ENCODE measurements at regions of chr15 and their contacts with region 1.

Region 1: GRCh38 chr15:101008158-101009139 is 89.3 kb downstream of the LRRK1 start:
- DNase-seq: peak; percentile 74 to 92 (median 86)
- ATAC-seq: peak; percentile 98
- H3K4me3 ChIP-seq: peak overlapping the region; percentile 73 to 81
- H3K4me3 Mint-ChIP-seq: peak overlapping the region; percentile 88
- H3K27ac ChIP-seq: no peak overlapping the region
- H3K27ac Mint-ChIP-seq: peak overlapping the region; percentile 60
- H3K4me1 ChIP-seq: peaks cover 13% of the 10 kb centered on the region
- H3K4me1 Mint-ChIP-seq: peaks cover 19% of the 10 kb centered on the region
- H3K27me3 ChIP-seq: peaks cover 0 to 3% of the 10 kb centered on the region in 2 experiments
- H3K27me3 Mint-ChIP-seq: no peaks in the 10 kb centered on the region
- CTCF ChIP-seq: peak; percentile 96

Region 2: GRCh38 chr15:100627789-100628395 is 380.6 kb before region 1 on chr15:
- CTCF ChIA-PET with region 1: interaction called, 7 read pairs
- POLR2A ChIA-PET with region 1: no interaction called
- intact Hi-C with region 1: loop called in 1 of 2 experiments (anchors 1 kb)
- DNase-seq: peak; percentile 27 to 81 (median 65)
- ATAC-seq: peak; percentile 96
- H3K4me3 ChIP-seq: no peak overlapping the region
- H3K4me3 Mint-ChIP-seq: no peak overlapping the region
- H3K27ac ChIP-seq: no peak overlapping the region
- H3K27ac Mint-ChIP-seq: no peak overlapping the region
- H3K4me1 ChIP-seq: no peaks in the 10 kb centered on the region
- H3K4me1 Mint-ChIP-seq: peaks cover 31% of the 10 kb centered on the region
- H3K27me3 ChIP-seq: no peaks in the 10 kb centered on the region
- H3K27me3 Mint-ChIP-seq: no peaks in the 10 kb centered on the region
- CTCF ChIP-seq: peak; percentile 81

Region 3: DNA sequence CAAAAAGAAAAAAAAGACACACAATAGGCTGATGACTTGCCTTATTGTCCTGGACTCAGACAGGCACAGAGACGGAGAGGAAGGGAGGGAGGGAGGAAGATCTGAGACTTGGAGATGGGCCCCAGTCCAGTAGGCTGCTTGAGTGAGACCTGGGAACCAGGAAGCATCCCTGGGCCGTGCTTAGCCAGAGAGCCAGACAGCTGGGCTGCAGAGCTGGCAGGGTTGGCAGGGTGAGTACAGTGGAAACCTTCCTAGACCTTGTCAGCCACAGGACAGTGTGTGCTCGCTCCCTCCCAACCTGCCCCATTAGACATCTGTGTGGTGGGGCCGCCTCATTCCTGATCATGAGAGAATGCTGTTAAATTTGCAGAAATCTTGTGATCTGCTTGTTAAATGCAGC is 236.7 kb before region 1 on chr15:
- CTCF ChIA-PET with region 1: no interaction called
- POLR2A ChIA-PET with region 1: no interaction called
- intact Hi-C with region 1: no loop called
- DNase-seq: no peak
- ATAC-seq: no peak
- H3K4me3 ChIP-seq: no peak overlapping the region
- H3K4me3 Mint-ChIP-seq: no peak overlapping the region
- H3K27ac ChIP-seq: no peak overlapping the region
- H3K27ac Mint-ChIP-seq: no peak overlapping the region
- H3K4me1 ChIP-seq: no peaks in the 10 kb centered on the region
- H3K4me1 Mint-ChIP-seq: no peaks in the 10 kb centered on the region
- H3K27me3 ChIP-seq: no peaks in the 10 kb centered on the region
- H3K27me3 Mint-ChIP-seq: peaks cover 3% of the 10 kb centered on the region
- CTCF ChIP-seq: no peak

Region 4: GRCh38 chr15:100849252-100850171 is 158.9 kb before region 1 on chr15:
- CTCF ChIA-PET with region 1: no interaction called
- POLR2A ChIA-PET with region 1: no interaction called
- intact Hi-C with region 1: loop called in 1 of 2 experiments (anchors 10 kb)
- DNase-seq: peak; percentile 18 to 77 (median 61)
- ATAC-seq: peak; percentile 94
- H3K4me3 ChIP-seq: peak overlapping the region; percentile 44 to 65
- H3K4me3 Mint-ChIP-seq: peak overlapping the region; percentile 88
- H3K27ac ChIP-seq: no peak overlapping the region
- H3K27ac Mint-ChIP-seq: no peak overlapping the region
- H3K4me1 ChIP-seq: peaks cover 4% of the 10 kb centered on the region
- H3K4me1 Mint-ChIP-seq: peaks cover 5% of the 10 kb centered on the region
- H3K27me3 ChIP-seq: peaks cover 0 to 6% of the 10 kb centered on the region in 2 experiments
- H3K27me3 Mint-ChIP-seq: peaks cover 20% of the 10 kb centered on the region
- CTCF ChIP-seq: no peak

Region 5: GRCh38 chr15:100863796-100864267 is 144.6 kb before region 1 on chr15:
- CTCF ChIA-PET with region 1: no interaction called
- POLR2A ChIA-PET with region 1: no interaction called
- intact Hi-C with region 1: no loop called
- DNase-seq: no peak
- ATAC-seq: no peak
- H3K4me3 ChIP-seq: no peak overlapping the region
- H3K4me3 Mint-ChIP-seq: no peak overlapping the region
- H3K27ac ChIP-seq: no peak overlapping the region
- H3K27ac Mint-ChIP-seq: no peak overlapping the region
- H3K4me1 ChIP-seq: no peaks in the 10 kb centered on the region
- H3K4me1 Mint-ChIP-seq: no peaks in the 10 kb centered on the region
- H3K27me3 ChIP-seq: no peaks in the 10 kb centered on the region
- H3K27me3 Mint-ChIP-seq: peaks cover 15% of the 10 kb centered on the region
- CTCF ChIP-seq: no peak

Region 6: DNA sequence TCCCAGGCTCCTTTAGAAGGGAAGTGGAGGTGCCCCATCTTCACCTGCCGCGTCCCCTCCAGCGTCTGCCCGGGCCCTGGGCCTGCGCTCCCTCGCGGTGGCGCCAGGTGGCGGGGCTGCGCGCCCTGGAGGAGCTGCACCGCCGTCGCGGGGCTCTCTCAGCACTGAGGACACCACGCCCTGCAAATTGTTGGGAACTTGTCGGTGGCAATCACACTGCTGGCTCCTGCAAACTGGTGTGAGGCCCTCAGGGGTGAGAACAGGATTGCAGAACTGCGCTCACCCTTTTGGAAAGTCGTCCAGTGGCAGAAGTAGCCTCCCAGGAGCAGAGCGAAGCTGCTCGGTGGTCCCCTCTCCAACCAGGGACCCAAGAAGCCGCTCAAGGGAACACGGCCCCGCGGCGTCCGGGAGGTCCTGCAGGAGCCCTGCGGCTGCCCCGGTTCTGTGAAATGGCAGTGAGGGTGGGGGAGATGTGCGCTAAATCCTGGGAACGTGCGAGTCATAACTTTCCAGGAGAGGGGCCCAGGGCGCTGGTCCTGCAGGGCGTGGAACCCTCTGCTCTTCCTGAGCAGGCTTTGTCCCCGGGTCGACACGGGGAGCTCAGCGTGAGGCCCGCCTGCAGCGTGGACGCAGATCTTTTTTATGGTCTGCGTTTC is 90.3 kb before region 1 on chr15:
- CTCF ChIA-PET with region 1: interaction called, 83 read pairs
- POLR2A ChIA-PET with region 1: interaction called, 3 read pairs
- intact Hi-C with region 1: loop called (anchors 1 kb)
- DNase-seq: peak; percentile 24 to 72 (median 56)
- ATAC-seq: peak; percentile 95
- H3K4me3 ChIP-seq: peak overlapping the region; percentile 33 to 67
- H3K4me3 Mint-ChIP-seq: peak overlapping the region; percentile 83
- H3K27ac ChIP-seq: no peak overlapping the region
- H3K27ac Mint-ChIP-seq: no peak overlapping the region
- H3K4me1 ChIP-seq: peaks cover 8% of the 10 kb centered on the region
- H3K4me1 Mint-ChIP-seq: peaks cover 18% of the 10 kb centered on the region
- H3K27me3 ChIP-seq: peaks cover 0 to 14% of the 10 kb centered on the region in 2 experiments
- H3K27me3 Mint-ChIP-seq: peaks cover 66% of the 10 kb centered on the region
- CTCF ChIP-seq: peak; percentile 71

Region 7: DNA sequence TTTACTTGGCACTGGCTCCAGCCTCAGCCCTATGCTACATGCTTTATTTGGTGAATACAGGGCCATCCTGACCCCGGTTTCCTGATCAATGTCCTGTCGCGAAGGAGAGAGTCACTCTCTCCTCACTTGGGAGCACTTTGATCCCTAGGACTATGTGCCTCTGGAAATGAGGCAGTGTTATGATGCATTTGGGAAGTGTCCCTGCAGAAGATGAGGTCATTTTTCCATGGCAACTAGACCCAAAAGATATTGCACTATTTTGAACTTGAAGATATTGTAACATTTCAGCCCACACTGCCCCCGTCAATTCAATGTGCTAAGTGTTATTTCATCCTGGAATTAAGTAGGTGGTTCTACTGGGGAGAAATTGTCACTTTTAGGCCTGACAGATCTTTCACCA is 21.3 kb before region 1 on chr15:
- CTCF ChIA-PET with region 1: interaction called, 14 read pairs
- POLR2A ChIA-PET with region 1: interaction called, 3 read pairs
- intact Hi-C with region 1: no loop called
- DNase-seq: no peak
- ATAC-seq: no peak
- H3K4me3 ChIP-seq: no peak overlapping the region
- H3K4me3 Mint-ChIP-seq: no peak overlapping the region
- H3K27ac ChIP-seq: no peak overlapping the region
- H3K27ac Mint-ChIP-seq: no peak overlapping the region
- H3K4me1 ChIP-seq: no peaks in the 10 kb centered on the region
- H3K4me1 Mint-ChIP-seq: no peaks in the 10 kb centered on the region
- H3K27me3 ChIP-seq: no peaks in the 10 kb centered on the region
- H3K27me3 Mint-ChIP-seq: peaks cover 13% of the 10 kb centered on the region
- CTCF ChIP-seq: no peak